ENCODE measurements at regions of chr16 and their contacts with region 1.

Region 1: GRCh38 chr16:59527206-59527997 is 793.3 kb upstream of the GOT2 start:
- DNase-seq: peak; percentile 24
- H3K4me3 Mint-ChIP-seq: no peak overlapping the region
- H3K27ac Mint-ChIP-seq: no peak overlapping the region
- H3K4me1 Mint-ChIP-seq: no peaks in the 10 kb centered on the region
- H3K27me3 Mint-ChIP-seq: no peaks in the 10 kb centered on the region
- CTCF ChIP-seq: no peak

Region 2: GRCh38 chr16:59543641-59544040 is 16.2 kb after region 1 on chr16:
- CTCF ChIA-PET with region 1: no interaction called
- intact Hi-C with region 1: no loop called
- DNase-seq: no peak
- H3K4me3 Mint-ChIP-seq: no peak overlapping the region
- H3K27ac Mint-ChIP-seq: no peak overlapping the region
- H3K4me1 Mint-ChIP-seq: no peaks in the 10 kb centered on the region
- H3K27me3 Mint-ChIP-seq: no peaks in the 10 kb centered on the region
- CTCF ChIP-seq: no peak

Region 3: DNA sequence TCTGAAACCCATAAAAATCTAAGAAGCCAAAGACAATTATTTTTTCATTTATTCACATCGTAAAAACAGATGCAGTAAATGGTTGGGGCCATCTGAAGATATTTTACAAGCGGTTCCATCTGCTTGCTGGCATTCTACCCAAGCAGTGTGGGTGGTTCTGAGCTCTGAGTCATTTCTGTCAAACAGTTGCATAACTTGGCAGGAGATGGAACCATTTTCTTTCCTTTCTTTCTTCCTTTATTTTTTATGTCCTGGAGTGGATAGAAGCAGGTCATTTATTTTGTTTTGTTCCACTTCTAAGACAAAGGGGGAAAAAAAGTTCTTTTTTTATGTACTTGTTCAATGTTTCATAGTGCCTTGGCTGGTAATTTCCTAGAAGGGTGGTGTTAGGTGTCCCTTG is 358.6 kb after region 1 on chr16:
- CTCF ChIA-PET with region 1: no interaction called
- intact Hi-C with region 1: loop called (anchors 10 kb)
- DNase-seq: peak; percentile 28
- H3K4me3 Mint-ChIP-seq: no peak overlapping the region
- H3K27ac Mint-ChIP-seq: no peak overlapping the region
- H3K4me1 Mint-ChIP-seq: peaks cover 8% of the 10 kb centered on the region
- H3K27me3 Mint-ChIP-seq: no peaks in the 10 kb centered on the region
- CTCF ChIP-seq: no peak